Endothelial cell of umbilical vein (primary cell): ENCODE measurements at regions of chr5 and their contacts with region 1.

Region 1: DNA sequence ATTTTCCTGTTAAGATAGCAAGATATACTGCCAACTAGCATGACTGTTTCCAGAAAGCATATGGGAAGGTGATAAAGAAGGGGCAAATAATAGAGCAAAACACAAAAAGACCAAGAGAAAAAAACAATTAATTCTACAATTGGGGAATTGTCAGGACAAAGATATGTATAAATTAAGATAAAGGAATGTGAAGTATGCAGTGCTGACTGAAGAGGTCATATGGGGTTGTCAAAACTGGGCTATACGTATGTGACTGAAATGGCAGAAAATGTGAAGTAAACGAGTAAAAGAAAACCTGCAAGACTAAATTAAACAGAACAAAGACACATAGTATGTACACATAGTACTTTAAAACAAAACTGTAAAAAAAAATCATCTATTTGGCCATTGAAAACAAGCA is 222.3 kb downstream of the ARL15 start:
- DNase-seq: peak; percentile 28
- H3K4me3 ChIP-seq: no peak overlapping the region
- H3K27ac ChIP-seq: peak overlapping the region; percentile 65
- H3K4me1 ChIP-seq: peaks cover 22% of the 10 kb centered on the region
- H3K27me3 ChIP-seq: no peaks in the 10 kb centered on the region
- CTCF ChIP-seq: no peak
- POLR2A ChIP-seq: no peak

Region 2: GRCh38 chr5:54062958-54063357 is 25.1 kb before region 1 on chr5:
- CTCF ChIA-PET with region 1: no interaction called
- POLR2A ChIA-PET with region 1: no interaction called
- dilution Hi-C with region 1: no loop called
- intact Hi-C with region 1: loop called (anchors 2 kb)
- DNase-seq: peak; percentile 42
- H3K4me3 ChIP-seq: no peak overlapping the region
- H3K27ac ChIP-seq: no peak overlapping the region
- H3K4me1 ChIP-seq: no peaks in the 10 kb centered on the region
- H3K27me3 ChIP-seq: no peaks in the 10 kb centered on the region
- CTCF ChIP-seq: no peak
- POLR2A ChIP-seq: no peak